ENCODE measurements at regions of chr7 and their contacts with region 1.

Region 1: GRCh38 chr7:128031901-128032604 is 816 bp upstream of the LRRC4 start:
- DNase-seq: peak; percentile 67
- ATAC-seq: peak; percentile 94
- H3K4me3 Mint-ChIP-seq: peak overlapping the region; percentile 69
- H3K27ac Mint-ChIP-seq: no peak overlapping the region
- H3K4me1 Mint-ChIP-seq: peaks cover 2% of the 10 kb centered on the region
- H3K27me3 Mint-ChIP-seq: peaks cover 20% of the 10 kb centered on the region

Region 2: GRCh38 chr7:127708788-127709187 is 323.3 kb before region 1 on chr7:
- CTCF ChIA-PET with region 1: interaction called, 10 read pairs
- DNase-seq: peak; percentile 79
- ATAC-seq: peak; percentile 81
- H3K4me3 Mint-ChIP-seq: no peak overlapping the region
- H3K27ac Mint-ChIP-seq: no peak overlapping the region
- H3K4me1 Mint-ChIP-seq: peaks cover 1% of the 10 kb centered on the region
- H3K27me3 Mint-ChIP-seq: no peaks in the 10 kb centered on the region